BJ (cell line): ENCODE measurements at regions of chr6 and their contacts with region 1.

Region 1: GRCh38 chr6:26122793-26123674 is 35.8 kb downstream of the HFE start:
- DNase-seq: peak; percentile 98
- H3K4me3 ChIP-seq: peak overlapping the region; percentile 59
- H3K27me3 ChIP-seq: no peaks in the 10 kb centered on the region
- CTCF ChIP-seq: no peak

Region 2: GRCh38 chr6:25962149-25963127 is 160.6 kb before region 1 on chr6 and contains the start of gene TRIM38:
- CTCF ChIA-PET with region 1: no interaction called
- POLR2A ChIA-PET with region 1: no interaction called
- DNase-seq: peak; percentile 83
- H3K4me3 ChIP-seq: peak within 1 kb of the TSS; percentile 70
- H3K27me3 ChIP-seq: no peaks in the 10 kb centered on the region
- CTCF ChIP-seq: no peak
- polyA plus RNA-seq, gene TRIM38: 4.7 and 7.7 TPM in 2 replicates

Region 3: DNA sequence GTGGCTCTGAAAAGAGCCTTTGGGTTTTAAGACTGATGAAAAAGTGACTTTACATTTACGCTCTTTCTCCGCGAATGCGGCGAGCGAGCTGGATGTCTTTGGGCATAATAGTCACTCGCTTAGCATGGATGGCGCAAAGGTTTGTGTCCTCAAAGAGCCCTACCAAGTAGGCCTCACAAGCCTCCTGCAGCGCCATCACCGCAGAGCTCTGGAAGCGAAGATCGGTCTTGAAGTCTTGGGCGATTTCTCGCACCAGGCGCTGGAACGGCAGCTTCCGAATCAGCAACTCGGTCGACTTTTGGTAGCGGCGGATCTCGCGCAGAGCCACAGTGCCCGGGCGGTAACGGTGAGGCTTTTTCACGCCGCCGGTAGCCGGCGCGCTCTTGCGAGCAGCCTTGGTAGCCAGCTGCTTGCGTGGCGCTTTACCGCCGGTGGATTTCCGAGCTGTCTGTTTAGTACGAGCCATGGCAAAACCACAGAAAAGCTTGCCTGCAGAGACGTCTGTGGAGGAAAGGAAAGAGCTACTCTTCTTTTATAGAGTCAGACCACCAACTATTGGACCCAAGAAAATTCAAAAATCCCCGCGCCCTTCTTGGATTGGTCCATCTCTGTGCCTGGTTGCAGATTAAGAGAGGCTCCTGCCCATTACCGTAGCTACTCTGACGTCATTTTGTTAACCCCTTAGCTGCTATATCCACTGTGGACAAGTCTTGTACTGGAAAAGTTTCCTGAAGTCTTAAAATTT is 91.3 kb before region 1 on chr6:
- CTCF ChIA-PET with region 1: interaction called, 4 read pairs
- POLR2A ChIA-PET with region 1: interaction called, 10 read pairs
- DNase-seq: peak; percentile 80
- H3K4me3 ChIP-seq: peak overlapping the region; percentile 45
- H3K27me3 ChIP-seq: no peaks in the 10 kb centered on the region
- CTCF ChIP-seq: peak; percentile 39; the same call in 1 of the 2 replicates

Region 4: DNA sequence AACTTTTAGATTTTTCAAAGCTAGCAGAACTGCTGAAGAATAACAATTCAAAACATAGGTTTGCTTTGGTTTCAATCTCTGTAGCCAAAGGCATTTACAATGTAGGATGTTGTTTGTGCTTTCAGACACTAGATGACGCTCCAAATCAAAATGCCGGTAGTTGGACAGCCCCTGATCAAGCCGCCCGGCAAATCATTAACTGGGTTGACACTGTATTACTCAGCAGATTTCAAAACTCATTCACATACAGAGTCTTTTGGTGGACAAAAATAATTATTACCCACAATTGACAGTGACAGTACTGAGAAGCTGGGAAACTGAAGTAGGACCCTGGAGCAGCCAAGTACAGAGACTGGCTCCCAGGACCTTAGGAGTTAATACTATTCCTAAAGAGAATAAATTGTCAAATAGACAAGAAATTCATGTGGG is 57.1 kb before region 1 on chr6:
- CTCF ChIA-PET with region 1: interaction called, 11 read pairs
- POLR2A ChIA-PET with region 1: no interaction called
- DNase-seq: no peak
- H3K4me3 ChIP-seq: no peak overlapping the region
- H3K27me3 ChIP-seq: no peaks in the 10 kb centered on the region
- CTCF ChIP-seq: peak; percentile 89

Region 5: DNA sequence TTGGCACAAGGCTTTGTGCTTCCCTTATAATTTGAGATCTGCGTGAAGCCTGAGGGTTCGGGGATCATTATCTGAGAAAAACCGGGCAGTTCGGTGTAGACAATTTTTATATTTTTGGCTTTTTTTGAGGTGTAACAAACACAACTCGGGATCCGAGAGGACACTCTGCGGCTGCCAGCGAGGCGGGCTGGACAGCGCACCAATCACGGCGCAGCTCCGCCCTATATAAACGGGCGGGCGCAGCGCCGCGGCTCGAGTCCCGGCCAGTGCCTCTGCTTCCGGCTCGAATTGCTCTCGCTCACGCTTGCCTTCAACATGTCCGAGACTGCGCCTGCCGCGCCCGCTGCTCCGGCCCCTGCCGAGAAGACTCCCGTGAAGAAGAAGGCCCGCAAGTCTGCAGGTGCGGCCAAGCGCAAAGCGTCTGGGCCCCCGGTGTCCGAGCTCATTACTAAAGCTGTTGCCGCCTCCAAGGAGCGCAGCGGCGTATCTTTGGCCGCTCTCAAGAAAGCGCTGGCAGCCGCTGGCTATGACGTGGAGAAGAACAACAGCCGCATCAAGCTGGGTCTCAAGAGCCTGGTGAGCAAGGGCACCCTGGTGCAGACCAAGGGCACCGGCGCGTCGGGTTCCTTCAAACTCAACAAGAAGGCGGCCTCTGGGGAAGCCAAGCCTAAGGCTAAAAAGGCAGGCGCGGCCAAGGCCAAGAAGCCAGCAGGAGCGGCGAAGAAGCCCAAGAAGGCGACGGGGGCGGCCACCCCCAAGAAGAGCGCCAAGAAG is 33.2 kb after region 1 on chr6:
- CTCF ChIA-PET with region 1: interaction called, 4 read pairs
- POLR2A ChIA-PET with region 1: interaction called, 172 read pairs
- DNase-seq: peak; percentile 65
- H3K4me3 ChIP-seq: peak overlapping the region; percentile 54
- H3K27me3 ChIP-seq: no peaks in the 10 kb centered on the region
- CTCF ChIP-seq: no peak; the same call in 1 of the 2 replicates

Region 6: GRCh38 chr6:26196846-26197648 is 74.0 kb after region 1 on chr6:
- CTCF ChIA-PET with region 1: interaction called, 3 read pairs
- POLR2A ChIA-PET with region 1: interaction called, 41 read pairs
- DNase-seq: peak; percentile 83
- H3K4me3 ChIP-seq: peak overlapping the region; percentile 82
- H3K27me3 ChIP-seq: no peaks in the 10 kb centered on the region
- CTCF ChIP-seq: 0 out of 2 replicates have a peak, but pooled peaks have one; percentile 13